ENCODE measurements at regions of chr20 and their contacts with region 1.

Region 1: GRCh38 chr20:47515843-47516242 is 14.2 kb downstream of the NCOA3 start:
- DNase-seq: no peak
- ATAC-seq: peak; percentile 88
- H3K4me3 Mint-ChIP-seq: peak overlapping the region; percentile 5
- H3K27ac Mint-ChIP-seq: peak overlapping the region; percentile 89
- H3K4me1 Mint-ChIP-seq: peaks cover 65% of the 10 kb centered on the region
- H3K27me3 Mint-ChIP-seq: no peaks in the 10 kb centered on the region

Region 2: DNA sequence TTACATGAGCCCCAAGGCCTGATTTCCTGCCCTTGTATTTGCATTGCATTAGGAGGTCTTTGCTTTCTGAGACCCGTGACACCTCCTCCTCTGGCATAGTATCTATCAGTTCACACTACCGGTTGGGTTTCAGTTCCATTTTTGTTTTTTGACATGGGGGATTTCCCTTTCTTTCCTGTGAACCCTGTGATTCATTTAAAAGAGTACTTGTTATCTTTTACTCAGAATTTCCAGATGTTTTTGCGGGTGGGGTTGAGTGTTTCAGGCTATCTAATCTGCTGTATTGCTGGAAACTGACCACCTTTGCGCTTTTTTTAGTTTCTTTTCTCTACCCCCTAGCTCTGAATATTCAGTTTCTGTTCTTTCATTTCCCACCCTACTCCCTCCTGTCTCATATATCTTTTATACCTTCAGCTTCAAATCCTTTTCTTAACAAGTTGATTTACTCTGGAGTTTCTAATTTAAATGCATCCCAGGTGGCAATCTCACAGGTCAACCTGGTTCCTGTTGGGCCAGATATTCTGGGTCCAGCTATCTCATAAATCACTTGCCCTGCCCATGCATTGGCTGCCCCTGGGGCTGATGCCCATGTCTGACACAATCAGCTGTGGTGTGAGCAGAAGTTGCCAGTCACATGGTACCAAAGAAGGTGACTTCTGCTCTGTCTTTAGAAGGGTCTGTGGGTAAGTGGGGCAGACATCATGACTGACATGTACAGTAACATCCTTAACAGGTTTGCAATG is 28.5 kb before region 1 on chr20:
- CTCF ChIA-PET with region 1: no interaction called
- POLR2A ChIA-PET with region 1: interaction called, 3 read pairs
- intact Hi-C with region 1: loop called in 1 of 2 experiments (anchors 2 kb)
- DNase-seq: peak; percentile 78
- ATAC-seq: peak; percentile 88
- H3K4me3 Mint-ChIP-seq: peak overlapping the region; percentile 26
- H3K27ac Mint-ChIP-seq: peak overlapping the region; percentile 99
- H3K4me1 Mint-ChIP-seq: peaks cover 80% of the 10 kb centered on the region
- H3K27me3 Mint-ChIP-seq: no peaks in the 10 kb centered on the region

Region 3: GRCh38 chr20:47540443-47541354 is 24.9 kb after region 1 on chr20:
- CTCF ChIA-PET with region 1: interaction called, 3 read pairs
- POLR2A ChIA-PET with region 1: no interaction called
- intact Hi-C with region 1: loop called in 1 of 2 experiments (anchors 2 kb)
- DNase-seq: no peak
- ATAC-seq: peak; percentile 61
- H3K4me3 Mint-ChIP-seq: no peak overlapping the region
- H3K27ac Mint-ChIP-seq: peak overlapping the region; percentile 66
- H3K4me1 Mint-ChIP-seq: peaks cover 78% of the 10 kb centered on the region
- H3K27me3 Mint-ChIP-seq: no peaks in the 10 kb centered on the region

Measured in activated CD4-positive, alpha-beta T cell treated with anti-CD3 and anti-CD28 coated beads for 36 hours (primary cell).